ENCODE measurements at regions of chr14 and their contacts with region 1.

Region 1: GRCh38 chr14:39114073-39114838 is at the start of gene GEMIN2:
- DNase-seq: peak; percentile 87 to 96 (median 94)
- H3K4me3 ChIP-seq: peak within 1 kb of the TSS; percentile 60 to 98 (median 82)
- H3K27ac ChIP-seq: peak within 1 kb of the TSS; percentile 7 to 95 (median 81)
- H3K27me3 ChIP-seq: no peaks in the 10 kb centered on the region
- CTCF ChIP-seq: peak in 22 of 56 donors; percentile 3 to 49 (median 24)
- total RNA-seq, gene GEMIN2: 7.4 to 23.1 (median 14.5) TPM

Region 2: GRCh38 chr14:39266871-39267591 is 152.8 kb after region 1 on chr14:
- intact Hi-C with region 1: loop called (anchors 2 to 10 kb)
- DNase-seq: peak; percentile 50 to 86 (median 78)
- H3K4me3 ChIP-seq: peak overlapping the region; percentile 58 to 98 (median 91)
- H3K27ac ChIP-seq: peak overlapping the region; percentile 80 to 100 (median 97)
- H3K27me3 ChIP-seq: no peaks in the 10 kb centered on the region
- CTCF ChIP-seq: peak in 8 of 56 donors; percentile 2 to 31 (median 14)

Region 3: DNA sequence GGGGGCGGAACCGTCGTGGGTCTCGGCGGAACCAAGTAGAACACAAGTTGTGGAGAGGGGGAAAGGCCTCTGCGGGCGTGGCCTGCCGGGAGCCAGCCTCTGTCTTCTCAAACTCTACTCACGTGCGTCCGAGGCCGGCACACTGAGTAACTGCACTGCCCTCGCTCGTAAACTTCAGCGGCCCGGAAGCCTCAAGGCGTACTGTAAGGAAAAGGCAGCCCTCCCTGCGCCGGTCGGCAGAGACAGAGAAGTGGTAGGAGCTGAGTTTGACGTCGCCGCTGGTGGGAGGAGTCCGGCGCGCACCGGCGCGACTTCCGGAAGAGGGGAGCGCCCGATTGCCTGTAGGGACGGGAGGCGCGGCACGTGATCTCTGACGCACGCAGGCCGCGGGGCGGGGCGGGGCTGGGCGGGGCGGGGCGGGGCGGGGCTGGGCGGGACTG is 317.9 kb after region 1 on chr14 and contains the start of gene FBXO33:
- intact Hi-C with region 1: loop called in 1 of 2 experiments (anchors 5 kb)
- DNase-seq: peak; percentile 94 to 98 (median 96)
- H3K4me3 ChIP-seq: peak within 1 kb of the TSS; percentile 73 to 100 (median 93)
- H3K27ac ChIP-seq: peak within 1 kb of the TSS; percentile 83 to 99 (median 98)
- H3K27me3 ChIP-seq: no peaks in the 10 kb centered on the region
- CTCF ChIP-seq: peak in 5 of 56 donors; percentile 1 to 10 (median 5)
- total RNA-seq, gene FBXO33: 13.8 to 42.2 (median 27.4) TPM

Measured in dorsolateral prefrontal cortex (tissue), 120 donors.